ENCODE measurements at regions of chr1 and their contacts with region 1.

Region 1: DNA sequence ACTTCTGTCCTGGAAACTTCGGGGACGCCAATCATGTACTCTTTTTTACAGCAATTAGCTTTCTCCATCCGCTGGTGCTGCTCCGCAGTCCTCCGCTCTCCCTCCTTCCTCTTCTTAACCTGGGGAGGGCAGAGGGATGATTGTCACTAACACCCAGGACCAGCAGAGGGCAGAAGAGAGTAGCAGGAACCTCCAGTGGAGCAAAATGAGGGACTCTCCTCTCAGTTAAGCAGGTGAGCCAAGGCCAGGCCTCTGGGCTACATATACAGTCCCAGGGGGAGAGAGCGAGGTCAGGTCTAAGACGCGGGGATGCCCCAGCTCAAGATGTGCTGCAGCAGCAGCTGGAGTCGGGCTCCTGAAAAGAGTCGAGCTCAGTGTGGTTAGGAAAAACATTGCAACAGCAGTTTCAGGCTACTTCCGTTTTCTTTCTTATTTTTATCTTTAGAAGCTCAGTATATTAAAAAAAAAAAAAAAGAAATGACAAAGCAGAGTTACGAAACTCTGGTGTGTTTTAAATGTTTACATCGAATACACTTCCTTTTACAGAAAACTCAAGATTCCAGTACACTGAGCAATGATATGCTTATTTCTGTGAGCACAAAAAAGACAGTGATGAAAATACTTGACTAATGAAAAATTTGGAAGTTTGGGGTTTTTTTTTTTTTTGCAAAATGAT is 25.7 kb upstream of the NLRP3 start:
- DNase-seq: peak; percentile 86
- ATAC-seq: peak; percentile 98
- H3K4me3 Mint-ChIP-seq: peak overlapping the region; percentile 59
- H3K27ac Mint-ChIP-seq: peak overlapping the region; percentile 71
- H3K4me1 Mint-ChIP-seq: peaks cover 9% of the 10 kb centered on the region
- H3K27me3 Mint-ChIP-seq: peaks cover 14% of the 10 kb centered on the region

Region 2: DNA sequence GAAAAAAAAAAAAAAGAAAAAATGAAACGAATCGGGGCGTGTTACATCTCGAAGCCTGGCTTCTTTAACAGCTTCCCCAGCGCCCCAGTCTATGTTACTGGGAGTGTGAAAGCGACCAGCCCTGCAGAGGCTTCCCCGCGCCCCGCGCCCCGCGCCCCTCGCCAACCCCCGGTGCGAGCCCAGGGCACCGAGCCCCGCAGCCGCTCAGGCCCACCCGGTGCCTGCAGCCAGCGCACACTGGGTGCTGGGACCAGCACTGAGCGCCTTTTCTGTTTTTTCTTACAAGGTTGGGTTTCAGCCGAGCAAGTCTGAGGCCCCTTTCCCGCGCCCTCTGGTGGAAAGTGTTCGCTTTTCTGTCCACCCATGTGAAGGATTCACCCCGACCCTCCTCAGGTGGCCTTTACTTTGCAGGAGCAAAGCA is 16.5 kb before region 1 on chr1:
- CTCF ChIA-PET with region 1: interaction called, 29 read pairs
- DNase-seq: peak; percentile 67
- ATAC-seq: peak; percentile 78
- H3K4me3 Mint-ChIP-seq: peak overlapping the region; percentile 22
- H3K27ac Mint-ChIP-seq: no peak overlapping the region
- H3K4me1 Mint-ChIP-seq: peaks cover 5% of the 10 kb centered on the region
- H3K27me3 Mint-ChIP-seq: peaks cover 23% of the 10 kb centered on the region

Region 3: DNA sequence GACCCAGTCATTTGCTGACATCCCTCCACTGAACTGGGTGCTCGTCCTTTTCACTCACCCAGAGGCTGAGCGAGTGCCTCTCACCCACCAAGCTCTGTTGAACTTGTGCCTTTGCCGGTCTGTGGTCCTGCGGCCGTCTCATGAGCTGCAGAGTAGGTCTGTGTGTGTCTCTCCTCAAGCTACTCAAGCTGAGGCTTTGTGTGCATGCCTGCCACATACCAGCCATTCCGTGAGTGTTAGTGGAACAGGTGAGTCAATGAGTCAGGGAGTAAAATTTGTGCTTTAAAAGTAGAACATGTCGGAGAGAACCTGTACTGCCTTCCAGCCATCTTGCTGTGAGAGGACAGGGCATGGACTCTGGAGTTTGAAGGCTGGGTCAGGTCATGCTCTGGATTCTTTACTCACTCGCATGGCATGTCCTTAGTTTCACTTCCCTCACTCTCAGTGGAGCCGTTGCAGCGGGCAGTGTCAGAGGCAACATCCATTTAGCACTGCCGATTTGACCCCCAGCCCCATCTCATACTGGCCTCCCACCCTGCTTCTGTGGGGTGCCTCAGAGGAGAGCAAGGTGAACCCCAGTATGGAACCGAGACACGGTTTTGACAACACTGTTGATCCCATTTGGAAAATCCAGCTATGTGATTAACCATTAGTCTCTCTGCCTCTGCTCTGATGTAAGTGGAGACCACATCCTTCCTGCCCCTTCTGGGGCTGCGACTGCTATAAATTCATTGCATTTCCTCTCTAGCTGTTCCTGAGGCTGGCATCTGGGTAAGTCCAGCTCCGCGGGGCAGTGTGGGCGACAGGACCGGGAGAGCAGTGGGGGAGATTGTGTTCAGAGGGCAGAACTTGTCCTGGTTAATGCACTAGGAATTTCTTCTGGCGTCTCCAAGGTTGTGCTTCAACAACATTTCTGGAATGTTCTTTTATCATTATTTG is 25.4 kb after region 1 on chr1 and contains the start of gene NLRP3:
- CTCF ChIA-PET with region 1: interaction called, 18 read pairs
- DNase-seq: peak; percentile 64
- ATAC-seq: peak; percentile 81
- H3K4me3 Mint-ChIP-seq: peak within 1 kb of the TSS; percentile 35
- H3K27ac Mint-ChIP-seq: no peak within 1 kb of the TSS
- H3K4me1 Mint-ChIP-seq: peaks cover 26% of the 10 kb centered on the region
- H3K27me3 Mint-ChIP-seq: peaks cover 56% of the 10 kb centered on the region
- total RNA-seq, gene NLRP3: 0.33 to 0.44 TPM

Region 4: DNA sequence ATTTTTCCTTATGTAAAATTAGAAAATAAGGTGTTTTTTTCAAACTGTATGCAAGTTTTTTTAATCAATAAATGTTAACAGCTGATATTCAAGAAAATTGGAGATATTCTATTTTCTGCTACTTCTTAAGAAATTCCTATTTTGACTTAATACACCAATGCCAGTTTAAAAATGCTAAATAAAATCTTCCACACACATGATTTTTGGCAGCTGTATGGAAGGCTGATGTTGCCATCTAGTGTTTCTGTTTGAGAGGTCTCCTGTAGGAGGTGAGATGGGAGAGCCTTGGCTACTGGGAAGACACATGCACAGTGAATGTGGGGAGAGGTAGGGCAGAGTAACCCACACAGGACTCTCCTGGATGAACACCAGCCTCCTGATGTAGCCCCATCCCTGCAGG is 96.8 kb after region 1 on chr1:
- CTCF ChIA-PET with region 1: interaction called, 44 read pairs
- DNase-seq: no peak
- ATAC-seq: peak; percentile 53
- H3K4me3 Mint-ChIP-seq: no peak overlapping the region
- H3K27ac Mint-ChIP-seq: no peak overlapping the region
- H3K4me1 Mint-ChIP-seq: no peaks in the 10 kb centered on the region
- H3K27me3 Mint-ChIP-seq: peaks cover 15% of the 10 kb centered on the region

Region 5: GRCh38 chr1:247500865-247501264 is 110.6 kb after region 1 on chr1:
- CTCF ChIA-PET with region 1: no interaction called
- DNase-seq: no peak
- ATAC-seq: no peak
- H3K4me3 Mint-ChIP-seq: no peak overlapping the region
- H3K27ac Mint-ChIP-seq: no peak overlapping the region
- H3K4me1 Mint-ChIP-seq: no peaks in the 10 kb centered on the region
- H3K27me3 Mint-ChIP-seq: peaks cover 8% of the 10 kb centered on the region

Region 6: DNA sequence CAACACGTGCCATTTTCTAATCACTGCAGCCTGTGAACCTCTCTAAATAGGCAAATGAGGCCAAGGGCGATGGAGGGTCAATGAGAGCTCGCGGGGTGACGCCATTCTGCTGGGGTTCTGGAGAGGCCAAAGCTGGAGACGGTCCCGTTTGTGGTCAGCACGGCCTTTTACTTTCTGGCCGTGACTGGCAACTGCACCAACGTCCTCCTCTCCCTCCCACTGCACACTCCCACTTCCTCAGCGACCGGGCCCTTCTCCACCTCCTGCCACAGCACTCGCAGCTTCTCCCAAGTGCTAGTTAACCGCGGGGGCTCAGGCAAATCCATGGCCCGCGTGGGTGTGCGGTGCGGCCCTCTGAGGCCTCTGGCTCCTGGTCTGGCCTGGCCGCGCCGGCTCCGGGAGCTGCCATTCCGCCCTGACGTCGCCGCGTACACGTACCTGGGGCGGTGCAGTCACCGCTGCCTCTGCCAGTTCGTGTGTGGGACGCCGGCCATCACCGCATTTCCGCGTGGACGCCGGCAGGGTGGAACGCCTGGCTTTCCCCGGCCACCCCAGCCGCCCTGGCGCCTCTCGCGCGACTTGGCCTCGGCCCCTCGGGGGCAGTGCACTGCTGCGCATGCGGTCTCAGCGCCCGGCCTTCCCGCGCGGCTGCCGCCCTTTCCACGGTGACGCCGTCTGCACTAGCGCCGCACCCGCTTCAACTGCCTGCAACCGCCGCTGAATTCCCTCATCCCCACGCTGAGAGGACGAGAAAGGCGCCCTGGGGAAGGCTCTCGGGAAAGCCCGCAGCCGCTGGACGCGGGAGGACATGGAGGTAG is 127.8 kb after region 1 on chr1:
- CTCF ChIA-PET with region 1: no interaction called
- DNase-seq: no peak
- ATAC-seq: no peak
- H3K4me3 Mint-ChIP-seq: no peak overlapping the region
- H3K27ac Mint-ChIP-seq: no peak overlapping the region
- H3K4me1 Mint-ChIP-seq: no peaks in the 10 kb centered on the region
- H3K27me3 Mint-ChIP-seq: no peaks in the 10 kb centered on the region